Upper lobe of right lung (tissue), 1 donor: ENCODE measurements at regions of chr1 and their contacts with region 1.

Region 1: GRCh38 chr1:65075123-65075976 is 72.7 kb upstream of the AK4 start:
- DNase-seq: no peak
- ATAC-seq: peak; percentile 97
- H3K4me3 ChIP-seq: no peak overlapping the region
- H3K27ac ChIP-seq: no peak overlapping the region
- H3K4me1 ChIP-seq: no peaks in the 10 kb centered on the region
- H3K27me3 ChIP-seq: no peaks in the 10 kb centered on the region
- CTCF ChIP-seq: peak; percentile 78

Region 2: GRCh38 chr1:65209005-65209885 is 133.9 kb after region 1 on chr1:
- intact Hi-C with region 1: loop called (anchors 10 kb)
- DNase-seq: no peak
- ATAC-seq: peak; percentile 76
- H3K4me3 ChIP-seq: no peak overlapping the region
- H3K27ac ChIP-seq: no peak overlapping the region
- H3K4me1 ChIP-seq: no peaks in the 10 kb centered on the region
- H3K27me3 ChIP-seq: no peaks in the 10 kb centered on the region
- CTCF ChIP-seq: peak; percentile 67

Region 3: GRCh38 chr1:65729259-65729658 is 653.9 kb after region 1 on chr1:
- intact Hi-C with region 1: no loop called
- DNase-seq: no peak
- ATAC-seq: no peak
- H3K4me3 ChIP-seq: no peak overlapping the region
- H3K27ac ChIP-seq: no peak overlapping the region
- H3K4me1 ChIP-seq: no peaks in the 10 kb centered on the region
- H3K27me3 ChIP-seq: no peaks in the 10 kb centered on the region
- CTCF ChIP-seq: no peak